GM10248 (cell line): ENCODE measurements at regions of chr4 and their contacts with region 1.

Region 1: DNA sequence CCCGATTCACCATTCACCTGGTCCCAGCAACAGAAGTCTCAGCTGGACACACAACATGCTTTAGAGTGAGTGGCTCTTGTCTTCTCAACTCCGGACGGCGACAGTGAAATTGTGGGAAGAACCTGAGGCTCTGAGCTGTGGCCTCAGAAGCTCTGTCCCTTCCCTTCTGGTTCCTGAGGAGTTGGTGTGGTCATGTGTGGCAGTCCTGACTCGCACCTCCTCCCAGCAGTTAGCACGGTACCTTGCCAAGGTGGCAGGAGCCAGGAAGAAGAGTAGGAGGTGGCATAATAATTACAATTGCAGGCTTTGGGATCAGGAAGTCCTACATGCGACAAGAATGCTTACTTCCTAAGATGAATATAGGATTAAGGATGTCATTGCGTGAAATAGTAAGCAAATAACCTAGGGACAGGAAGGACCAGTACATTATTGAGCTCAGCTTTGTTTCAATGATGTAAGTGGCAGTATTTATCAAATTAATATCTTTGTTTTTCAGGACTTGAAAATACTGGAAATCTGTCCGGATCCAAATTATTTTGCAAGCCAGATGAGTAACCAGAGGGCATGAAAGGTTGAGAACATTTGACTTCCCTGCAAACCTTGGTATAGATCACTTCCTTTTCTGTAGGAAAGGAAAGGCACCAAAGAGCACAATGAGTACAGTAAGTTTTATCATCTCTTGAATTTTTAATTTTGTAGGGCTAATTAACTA is 21.1 kb downstream of the RNF4 start:
- DNase-seq: no peak
- CTCF ChIP-seq: no peak

Region 2: GRCh38 chr4:2412885-2413716 is 76.9 kb before region 1 on chr4:
- CTCF ChIA-PET with region 1: no interaction called
- POLR2A ChIA-PET with region 1: no interaction called
- DNase-seq: peak; percentile 64
- CTCF ChIP-seq: peak; percentile 25

Region 3: DNA sequence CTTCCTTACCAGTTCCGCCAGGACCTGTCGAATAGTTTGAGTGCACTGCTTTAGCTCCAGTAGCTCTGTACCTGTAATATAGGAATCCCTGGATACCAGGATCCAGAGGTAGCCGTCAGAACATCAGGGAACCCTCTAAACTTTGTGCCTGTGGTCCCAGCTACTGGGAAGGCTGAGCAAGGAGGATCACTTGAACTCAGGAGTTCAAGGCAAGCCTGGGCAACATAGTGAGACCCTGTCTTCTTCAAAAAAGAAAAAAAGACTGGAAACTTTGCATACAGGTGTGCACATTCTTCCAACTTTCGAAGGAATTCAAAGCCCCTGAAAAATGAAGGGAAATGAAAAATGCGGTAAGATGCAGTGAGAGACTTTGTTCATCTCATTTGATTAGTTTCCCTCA is 13.8 kb after region 1 on chr4:
- CTCF ChIA-PET with region 1: interaction called, 13 read pairs
- POLR2A ChIA-PET with region 1: interaction called, 3 read pairs
- DNase-seq: no peak
- CTCF ChIP-seq: no peak